Activated CD4-positive, alpha-beta T cell treated with anti-CD3 and anti-CD28 coated beads for 36 hours (primary cell): ENCODE measurements at regions of chr9 and their contacts with region 1.

Region 1: DNA sequence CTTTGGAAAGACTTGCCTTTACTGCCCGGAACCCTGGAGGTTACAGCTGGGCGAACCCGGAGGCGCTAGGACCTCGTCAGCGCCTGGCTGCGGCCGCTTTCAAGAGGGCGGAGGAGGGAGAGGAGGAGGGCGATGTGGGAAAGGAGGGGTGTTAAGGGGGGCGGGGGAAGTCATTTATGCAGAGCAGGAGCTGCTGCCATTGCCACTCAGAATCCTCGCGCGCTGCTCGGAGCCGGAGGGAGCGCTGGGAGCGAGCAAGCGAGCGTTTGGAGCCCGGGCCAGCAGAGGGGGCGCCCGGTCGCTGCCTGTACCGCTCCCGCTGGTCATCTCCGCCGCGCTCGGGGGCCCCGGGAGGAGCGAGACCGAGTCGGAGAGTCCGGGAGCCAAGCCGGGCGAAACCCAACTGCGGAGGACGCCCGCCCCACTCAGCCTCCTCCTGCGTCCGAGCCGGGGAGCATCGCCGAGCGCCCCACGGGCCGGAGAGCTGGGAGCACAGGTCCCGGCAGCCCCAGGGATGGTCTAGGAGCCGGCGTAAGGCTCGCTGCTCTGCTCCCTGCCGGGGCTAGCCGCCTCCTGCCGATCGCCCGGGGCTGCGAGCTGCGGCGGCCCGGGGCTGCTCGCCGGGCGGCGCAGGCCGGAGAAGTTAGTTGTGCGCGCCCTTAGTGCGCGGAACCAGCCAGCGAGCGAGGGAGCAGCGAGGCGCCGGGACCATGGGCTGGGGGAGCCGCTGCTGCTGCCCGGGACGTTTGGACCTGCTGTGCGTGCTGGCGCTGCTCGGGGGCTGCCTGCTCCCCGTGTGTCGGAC is at the start of gene PCSK5:
- DNase-seq: peak; percentile 91
- ATAC-seq: peak; percentile 82
- H3K4me3 Mint-ChIP-seq: peak within 1 kb of the TSS; percentile 93
- H3K27ac Mint-ChIP-seq: peak within 1 kb of the TSS; percentile 76
- H3K4me1 Mint-ChIP-seq: peaks cover 31% of the 10 kb centered on the region
- H3K27me3 Mint-ChIP-seq: peaks cover 4% of the 10 kb centered on the region
- total RNA-seq, gene PCSK5: 3.0 to 3.1 TPM

Region 2: GRCh38 chr9:75185585-75186170 is 705.0 kb before region 1 on chr9:
- CTCF ChIA-PET with region 1: no interaction called
- POLR2A ChIA-PET with region 1: no interaction called
- intact Hi-C with region 1: no loop called
- DNase-seq: peak; percentile 79
- ATAC-seq: peak; percentile 72
- H3K4me3 Mint-ChIP-seq: no peak overlapping the region
- H3K27ac Mint-ChIP-seq: no peak overlapping the region
- H3K4me1 Mint-ChIP-seq: peaks cover 19% of the 10 kb centered on the region
- H3K27me3 Mint-ChIP-seq: no peaks in the 10 kb centered on the region

Region 3: GRCh38 chr9:75909776-75910175 is 19.1 kb after region 1 on chr9:
- CTCF ChIA-PET with region 1: no interaction called
- POLR2A ChIA-PET with region 1: no interaction called
- intact Hi-C with region 1: loop called in 1 of 2 experiments (anchors 2 kb)
- DNase-seq: peak; percentile 14
- ATAC-seq: no peak
- H3K4me3 Mint-ChIP-seq: no peak overlapping the region
- H3K27ac Mint-ChIP-seq: no peak overlapping the region
- H3K4me1 Mint-ChIP-seq: peaks cover 48% of the 10 kb centered on the region
- H3K27me3 Mint-ChIP-seq: no peaks in the 10 kb centered on the region

Region 4: GRCh38 chr9:76004526-76004925 is 113.9 kb after region 1 on chr9:
- CTCF ChIA-PET with region 1: no interaction called
- POLR2A ChIA-PET with region 1: no interaction called
- intact Hi-C with region 1: loop called (anchors 5 kb)
- DNase-seq: no peak
- ATAC-seq: peak; percentile 73
- H3K4me3 Mint-ChIP-seq: no peak overlapping the region
- H3K27ac Mint-ChIP-seq: peak overlapping the region; percentile 32
- H3K4me1 Mint-ChIP-seq: peaks cover 50% of the 10 kb centered on the region
- H3K27me3 Mint-ChIP-seq: no peaks in the 10 kb centered on the region

Region 5: GRCh38 chr9:76116913-76117312 is 226.2 kb after region 1 on chr9:
- CTCF ChIA-PET with region 1: no interaction called
- POLR2A ChIA-PET with region 1: no interaction called
- intact Hi-C with region 1: loop called in 1 of 2 experiments (anchors 5 kb)
- DNase-seq: peak; percentile 10
- ATAC-seq: peak; percentile 43
- H3K4me3 Mint-ChIP-seq: no peak overlapping the region
- H3K27ac Mint-ChIP-seq: no peak overlapping the region
- H3K4me1 Mint-ChIP-seq: peaks cover 13% of the 10 kb centered on the region
- H3K27me3 Mint-ChIP-seq: no peaks in the 10 kb centered on the region

Region 6: DNA sequence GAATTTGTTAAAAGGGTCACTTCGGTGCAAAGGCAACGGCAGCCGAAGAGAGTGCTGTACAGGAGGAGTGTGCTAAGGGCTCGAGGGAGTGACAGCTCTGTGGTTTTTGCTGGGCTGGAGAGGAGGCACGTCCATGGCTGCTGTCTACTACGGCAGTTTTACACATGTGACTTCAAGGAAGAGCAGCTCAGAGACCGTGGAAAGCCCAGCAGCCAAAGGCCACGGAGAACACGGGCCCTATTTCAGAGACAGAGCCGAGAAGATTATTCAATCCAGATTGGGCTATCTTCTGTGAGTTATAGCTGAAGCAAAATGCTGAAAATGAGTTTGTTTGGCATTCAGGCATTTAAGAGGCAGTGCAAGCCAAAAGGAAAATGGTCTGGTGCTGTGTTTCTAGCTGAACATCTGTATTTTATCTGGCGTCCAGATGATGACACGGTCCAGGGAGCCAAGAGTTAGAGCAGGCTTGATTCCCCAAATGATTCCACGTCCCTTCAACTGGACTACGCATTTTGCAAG is 407.1 kb after region 1 on chr9:
- CTCF ChIA-PET with region 1: no interaction called
- POLR2A ChIA-PET with region 1: no interaction called
- intact Hi-C with region 1: loop called (anchors 5 to 10 kb)
- DNase-seq: no peak
- ATAC-seq: no peak
- H3K4me3 Mint-ChIP-seq: no peak overlapping the region
- H3K27ac Mint-ChIP-seq: no peak overlapping the region
- H3K4me1 Mint-ChIP-seq: peaks cover 8% of the 10 kb centered on the region
- H3K27me3 Mint-ChIP-seq: no peaks in the 10 kb centered on the region